Activated B cell treated with CpG ODN at 0.5 μM for 24 hours (primary cell): ENCODE measurements at regions of chr1 and their contacts with region 1.

Region 1: GRCh38 chr1:89692601-89693521 is 59.9 kb downstream of the LRRC8C start:
- DNase-seq: no peak
- ATAC-seq: peak; percentile 79
- H3K4me3 Mint-ChIP-seq: peak overlapping the region; percentile 44
- H3K27ac Mint-ChIP-seq: peak overlapping the region; percentile 80
- H3K4me1 Mint-ChIP-seq: peaks cover 59% of the 10 kb centered on the region
- H3K27me3 Mint-ChIP-seq: no peaks in the 10 kb centered on the region
- CTCF ChIP-seq: no peak

Region 2: GRCh38 chr1:89670163-89670562 is 22.7 kb before region 1 on chr1:
- CTCF ChIA-PET with region 1: no interaction called
- POLR2A ChIA-PET with region 1: no interaction called
- intact Hi-C with region 1: loop called (anchors 1 kb)
- DNase-seq: no peak
- ATAC-seq: peak; percentile 90
- H3K4me3 Mint-ChIP-seq: peak overlapping the region; percentile 16
- H3K27ac Mint-ChIP-seq: peak overlapping the region; percentile 69
- H3K4me1 Mint-ChIP-seq: peaks cover 45% of the 10 kb centered on the region
- H3K27me3 Mint-ChIP-seq: no peaks in the 10 kb centered on the region
- CTCF ChIP-seq: no peak

Region 3: GRCh38 chr1:89681045-89681729 is 11.7 kb before region 1 on chr1:
- CTCF ChIA-PET with region 1: no interaction called
- POLR2A ChIA-PET with region 1: interaction called, 4 read pairs
- intact Hi-C with region 1: loop called (anchors 1 kb)
- DNase-seq: no peak
- ATAC-seq: peak; percentile 81
- H3K4me3 Mint-ChIP-seq: peak overlapping the region; percentile 64
- H3K27ac Mint-ChIP-seq: peak overlapping the region; percentile 88
- H3K4me1 Mint-ChIP-seq: peaks cover 24% of the 10 kb centered on the region
- H3K27me3 Mint-ChIP-seq: no peaks in the 10 kb centered on the region
- CTCF ChIP-seq: no peak

Region 4: GRCh38 chr1:89706700-89707012 is 13.8 kb after region 1 on chr1:
- CTCF ChIA-PET with region 1: no interaction called
- POLR2A ChIA-PET with region 1: interaction called, 7 read pairs
- intact Hi-C with region 1: loop called (anchors 1 kb)
- DNase-seq: no peak
- ATAC-seq: peak; percentile 47
- H3K4me3 Mint-ChIP-seq: peak overlapping the region; percentile 51
- H3K27ac Mint-ChIP-seq: peak overlapping the region; percentile 78
- H3K4me1 Mint-ChIP-seq: peaks cover 40% of the 10 kb centered on the region
- H3K27me3 Mint-ChIP-seq: no peaks in the 10 kb centered on the region
- CTCF ChIP-seq: no peak

Region 5: DNA sequence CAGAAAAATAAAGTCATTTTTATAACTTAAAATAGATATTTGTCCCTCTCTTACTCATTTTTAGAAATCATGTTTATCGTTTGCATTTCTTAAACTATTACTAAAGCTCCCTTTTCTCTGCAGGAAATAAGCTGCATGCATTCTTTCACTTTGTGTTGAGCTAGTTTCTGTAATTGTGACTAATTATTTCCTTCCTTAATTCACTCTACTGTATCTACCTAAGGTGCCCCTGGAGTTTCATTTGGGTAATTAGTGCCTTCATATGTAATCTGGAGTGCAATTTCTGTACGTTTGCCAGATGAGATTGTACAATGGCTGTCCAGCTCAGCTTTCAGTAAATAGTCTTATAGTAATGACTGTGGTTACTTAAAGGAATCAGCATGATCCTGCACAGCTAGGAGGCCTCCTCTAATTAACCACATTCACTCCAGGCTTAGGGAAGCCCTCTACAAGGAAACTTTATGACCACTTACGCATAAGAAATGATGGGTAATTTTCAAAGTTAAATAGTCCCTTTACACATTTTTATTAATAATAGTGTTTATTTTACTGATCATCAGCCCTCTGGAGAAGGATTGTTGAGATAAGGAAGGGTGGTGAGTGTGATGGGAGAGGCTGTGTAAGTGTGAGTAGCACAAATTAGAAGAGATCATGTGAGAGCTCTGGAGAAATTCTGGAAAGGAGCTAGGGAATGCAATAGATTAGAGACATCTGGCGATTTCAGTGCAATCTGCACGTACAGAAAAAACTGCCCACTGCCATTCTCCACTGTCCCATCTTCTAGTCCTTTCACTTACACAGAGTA is 26.8 kb after region 1 on chr1:
- CTCF ChIA-PET with region 1: interaction called, 3 read pairs
- POLR2A ChIA-PET with region 1: interaction called, 10 read pairs
- intact Hi-C with region 1: loop called (anchors 1 kb)
- DNase-seq: no peak
- ATAC-seq: peak; percentile 92
- H3K4me3 Mint-ChIP-seq: peak overlapping the region; percentile 72
- H3K27ac Mint-ChIP-seq: peak overlapping the region; percentile 96
- H3K4me1 Mint-ChIP-seq: peaks cover 56% of the 10 kb centered on the region
- H3K27me3 Mint-ChIP-seq: no peaks in the 10 kb centered on the region
- CTCF ChIP-seq: no peak

Region 6: GRCh38 chr1:89757532-89757931 is 64.7 kb after region 1 on chr1:
- CTCF ChIA-PET with region 1: interaction called, 19 read pairs
- POLR2A ChIA-PET with region 1: interaction called, 3 read pairs
- intact Hi-C with region 1: loop called (anchors 1 kb)
- DNase-seq: no peak
- ATAC-seq: peak; percentile 64
- H3K4me3 Mint-ChIP-seq: peak overlapping the region; percentile 66
- H3K27ac Mint-ChIP-seq: peak overlapping the region; percentile 76
- H3K4me1 Mint-ChIP-seq: peaks cover 19% of the 10 kb centered on the region
- H3K27me3 Mint-ChIP-seq: no peaks in the 10 kb centered on the region
- CTCF ChIP-seq: no peak